Activated CD4-positive, alpha-beta T cell treated with anti-CD3 and anti-CD28 coated beads, Interleukin-2, amount 10 ng/mL, durations not matched to agents 24 days and 14 days (primary cell): ENCODE measurements at regions of chr6 and their contacts with region 1.

Region 1: GRCh38 chr6:42339991-42340401 is 111.7 kb downstream of the TRERF1 start:
- DNase-seq: peak; percentile 78
- H3K4me3 Mint-ChIP-seq: peak overlapping the region; percentile 65
- H3K27ac Mint-ChIP-seq: peak overlapping the region; percentile 94
- H3K4me1 Mint-ChIP-seq: peaks cover 75% of the 10 kb centered on the region
- H3K27me3 Mint-ChIP-seq: no peaks in the 10 kb centered on the region

Region 2: DNA sequence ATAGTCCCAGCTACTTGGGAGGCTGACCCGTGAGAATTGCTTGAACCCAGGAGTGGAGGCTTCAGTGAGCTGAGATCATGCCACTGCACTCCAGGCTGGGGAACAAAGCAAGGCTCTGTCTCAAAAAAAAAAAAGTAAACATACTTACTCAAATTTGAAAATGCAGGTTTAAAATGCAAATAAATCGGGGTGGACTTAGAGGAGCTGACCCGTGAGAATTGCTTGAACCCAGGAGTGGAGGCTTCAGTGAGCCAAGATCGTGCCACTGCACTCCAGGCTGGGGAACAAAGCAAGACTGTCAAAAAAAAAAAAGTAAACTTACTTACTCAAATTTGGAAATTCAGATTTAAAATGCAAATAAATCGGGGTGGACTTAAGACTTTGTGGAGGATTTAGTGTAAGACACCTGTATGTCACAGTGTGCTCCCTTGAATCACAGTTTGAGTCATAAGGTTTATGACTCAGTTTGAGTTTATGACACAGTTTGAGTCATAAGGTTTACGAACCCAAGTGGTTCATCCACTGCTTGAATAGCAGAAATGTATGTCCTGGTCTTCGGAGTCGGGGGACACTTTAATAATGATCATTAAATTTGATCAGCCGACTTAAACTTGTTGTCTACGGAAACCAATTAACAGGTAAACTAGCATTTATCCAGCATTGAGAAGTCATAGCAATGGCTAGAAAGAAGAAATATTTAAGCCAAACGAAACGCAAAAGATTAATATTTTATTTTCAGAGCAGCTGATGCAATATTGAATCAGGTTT is 115.6 kb before region 1 on chr6:
- intact Hi-C with region 1: loop called (anchors 2 kb)
- DNase-seq: no peak
- H3K4me3 Mint-ChIP-seq: peak overlapping the region; percentile 64
- H3K27ac Mint-ChIP-seq: peak overlapping the region; percentile 81
- H3K4me1 Mint-ChIP-seq: peaks cover 9% of the 10 kb centered on the region
- H3K27me3 Mint-ChIP-seq: no peaks in the 10 kb centered on the region

Region 3: GRCh38 chr6:42239351-42240055 is 100.5 kb before region 1 on chr6:
- intact Hi-C with region 1: no loop called
- DNase-seq: no peak
- H3K4me3 Mint-ChIP-seq: no peak overlapping the region
- H3K27ac Mint-ChIP-seq: peak overlapping the region; percentile 55
- H3K4me1 Mint-ChIP-seq: no peaks in the 10 kb centered on the region
- H3K27me3 Mint-ChIP-seq: no peaks in the 10 kb centered on the region

Region 4: DNA sequence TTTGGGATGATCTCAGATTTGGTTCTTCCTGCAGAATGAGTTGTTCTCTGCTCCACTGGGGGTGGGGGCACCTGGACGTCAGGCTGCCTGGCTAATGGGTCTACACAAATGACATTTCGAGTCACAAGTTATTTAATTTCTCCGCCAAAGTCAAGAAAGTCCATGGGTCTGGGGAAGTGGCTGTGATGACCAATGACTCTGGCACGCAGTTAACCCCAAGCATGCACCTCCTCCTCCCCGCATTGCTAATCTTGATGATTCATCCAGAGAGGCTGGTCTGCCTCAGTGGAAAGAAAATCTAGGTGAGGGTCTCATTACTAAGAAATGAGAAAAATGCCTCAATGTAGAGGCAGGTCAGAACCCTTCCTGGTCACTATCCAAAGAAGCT is 24.0 kb before region 1 on chr6:
- intact Hi-C with region 1: loop called (anchors 1 kb)
- DNase-seq: no peak
- H3K4me3 Mint-ChIP-seq: peak overlapping the region; percentile 7
- H3K27ac Mint-ChIP-seq: peak overlapping the region; percentile 85
- H3K4me1 Mint-ChIP-seq: peaks cover 47% of the 10 kb centered on the region
- H3K27me3 Mint-ChIP-seq: no peaks in the 10 kb centered on the region

Region 5: DNA sequence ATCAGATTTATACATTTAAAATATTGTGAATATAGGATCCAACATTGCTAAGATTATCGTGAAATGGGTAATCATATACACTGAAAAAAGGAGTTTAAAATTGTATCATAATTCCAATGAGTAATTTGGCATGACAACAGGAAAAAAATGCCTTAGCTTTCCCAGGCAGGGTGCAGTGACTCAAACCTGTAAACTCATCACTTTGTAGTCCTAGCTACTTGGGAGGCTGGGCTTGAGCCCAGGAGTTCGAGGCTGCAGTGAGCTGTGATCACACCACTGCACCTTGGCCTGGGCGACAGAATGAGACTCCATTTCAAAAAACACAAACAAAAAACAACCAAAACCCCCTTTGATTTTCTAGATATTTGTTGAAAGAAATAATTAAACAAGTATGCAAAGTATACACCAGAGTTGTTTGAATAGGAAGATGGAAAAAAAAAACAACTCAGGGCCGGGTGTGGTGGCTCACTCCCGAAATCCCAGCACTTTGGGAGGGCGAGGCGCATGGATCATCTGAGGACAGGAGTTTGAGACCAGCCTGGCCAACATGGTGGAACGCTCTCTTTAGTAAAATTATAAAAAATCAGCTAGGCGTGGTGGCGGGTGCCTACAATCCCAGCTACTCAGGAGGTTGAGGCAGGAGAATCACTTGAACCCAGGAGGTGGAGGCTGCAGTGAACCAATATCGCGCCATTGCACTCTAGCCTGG is 13.0 kb after region 1 on chr6:
- intact Hi-C with region 1: loop called (anchors 1 kb)
- DNase-seq: no peak
- H3K4me3 Mint-ChIP-seq: no peak overlapping the region
- H3K27ac Mint-ChIP-seq: no peak overlapping the region
- H3K4me1 Mint-ChIP-seq: peaks cover 15% of the 10 kb centered on the region
- H3K27me3 Mint-ChIP-seq: no peaks in the 10 kb centered on the region

Region 6: DNA sequence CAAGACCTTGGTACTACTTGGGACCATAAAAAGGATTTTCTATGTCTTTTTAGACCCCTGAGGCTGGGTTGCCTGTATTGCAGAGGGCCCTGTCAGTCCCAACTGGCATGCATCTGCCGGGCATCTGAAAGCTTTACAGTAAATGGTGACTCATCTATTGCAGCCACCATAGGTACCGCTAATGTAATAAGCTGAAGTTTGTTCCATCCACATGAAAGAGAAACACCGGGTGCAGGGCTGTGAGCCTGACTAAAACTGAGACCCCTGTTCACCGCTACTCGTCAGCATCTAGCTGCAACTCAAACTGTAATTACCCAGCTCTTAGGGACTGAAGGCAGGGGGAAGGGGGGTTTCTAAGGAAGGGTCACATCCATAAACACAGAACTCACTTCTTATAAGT is 62.2 kb after region 1 on chr6:
- intact Hi-C with region 1: loop called (anchors 1 kb)
- DNase-seq: peak; percentile 84
- H3K4me3 Mint-ChIP-seq: peak overlapping the region; percentile 49
- H3K27ac Mint-ChIP-seq: peak overlapping the region; percentile 84
- H3K4me1 Mint-ChIP-seq: peaks cover 61% of the 10 kb centered on the region
- H3K27me3 Mint-ChIP-seq: no peaks in the 10 kb centered on the region

Region 7: DNA sequence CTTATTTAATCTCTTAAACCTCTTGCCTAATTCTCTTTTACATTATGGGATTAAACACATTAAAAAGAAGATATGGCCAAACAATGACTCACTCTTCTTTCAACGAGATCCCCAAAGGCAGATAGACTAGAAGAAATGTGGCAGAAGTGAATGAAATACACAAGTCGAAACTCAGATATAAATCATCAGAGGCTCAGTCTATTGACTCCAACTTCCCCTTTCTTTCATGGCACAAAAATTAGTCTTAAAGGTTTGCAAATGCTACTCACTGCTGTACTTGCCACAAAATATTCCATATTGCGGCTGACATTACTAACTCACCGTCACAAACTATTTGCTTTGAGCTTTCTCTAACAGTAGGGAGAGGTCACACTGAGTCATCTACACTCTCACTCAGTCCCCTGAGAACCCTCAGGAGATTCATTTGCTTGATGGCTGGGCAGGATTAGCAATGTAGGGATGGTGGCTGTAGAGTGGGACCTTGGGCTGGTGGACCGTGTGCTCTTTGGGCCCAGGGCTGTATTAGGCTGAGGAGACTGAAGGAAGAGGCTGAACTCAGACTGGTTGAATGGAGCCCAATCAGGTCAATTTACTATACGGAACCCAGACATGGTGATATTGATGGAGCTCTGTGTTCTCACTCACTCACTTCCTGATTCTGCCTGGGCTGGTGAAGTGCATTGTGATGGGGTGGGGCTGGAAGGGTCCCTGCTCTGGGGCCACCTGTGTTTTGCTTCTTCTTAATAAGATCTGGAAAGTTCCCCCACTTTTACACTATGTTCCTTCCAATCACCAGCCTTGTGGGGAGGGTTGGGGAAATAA is 181.0 kb after region 1 on chr6:
- intact Hi-C with region 1: loop called (anchors 1 kb)
- DNase-seq: peak; percentile 55
- H3K4me3 Mint-ChIP-seq: no peak overlapping the region
- H3K27ac Mint-ChIP-seq: peak overlapping the region; percentile 89
- H3K4me1 Mint-ChIP-seq: peaks cover 10% of the 10 kb centered on the region
- H3K27me3 Mint-ChIP-seq: peaks cover 4% of the 10 kb centered on the region